ENCODE measurements at regions of chr1 and their contacts with region 1.

Region 1: DNA sequence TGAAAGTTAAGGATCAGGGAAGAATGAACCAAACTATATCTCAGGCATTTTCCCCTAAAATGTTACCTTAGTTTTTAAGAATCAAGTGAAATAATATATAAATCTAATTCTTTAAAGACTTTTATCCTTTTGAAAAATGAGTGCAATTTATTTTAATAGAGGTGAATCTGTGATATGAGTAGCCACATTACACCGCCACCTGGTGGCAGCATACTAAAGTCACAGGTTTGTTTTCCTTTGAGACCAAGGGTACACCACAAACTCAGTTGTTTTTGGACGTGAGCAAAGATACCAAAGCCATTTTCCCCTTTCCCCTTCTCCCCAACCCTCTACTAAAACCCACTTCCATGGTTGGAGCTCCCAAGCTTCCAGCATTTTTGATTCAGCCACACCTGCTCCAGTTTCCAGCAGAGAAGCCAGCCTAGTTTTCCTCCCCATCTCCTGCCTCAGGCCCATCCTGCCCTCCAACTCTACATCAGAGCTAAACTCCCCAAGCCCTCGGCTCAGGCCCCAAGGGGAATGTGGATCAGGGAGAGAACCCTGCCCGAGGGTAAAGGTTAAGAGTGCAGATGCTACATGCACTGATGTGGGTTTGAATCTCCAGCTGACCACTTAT is 22.9 kb upstream of the LDLRAP1 start:
- DNase-seq: no peak
- H3K4me3 ChIP-seq: no peak overlapping the region
- CTCF ChIP-seq: peak; percentile 55

Region 2: DNA sequence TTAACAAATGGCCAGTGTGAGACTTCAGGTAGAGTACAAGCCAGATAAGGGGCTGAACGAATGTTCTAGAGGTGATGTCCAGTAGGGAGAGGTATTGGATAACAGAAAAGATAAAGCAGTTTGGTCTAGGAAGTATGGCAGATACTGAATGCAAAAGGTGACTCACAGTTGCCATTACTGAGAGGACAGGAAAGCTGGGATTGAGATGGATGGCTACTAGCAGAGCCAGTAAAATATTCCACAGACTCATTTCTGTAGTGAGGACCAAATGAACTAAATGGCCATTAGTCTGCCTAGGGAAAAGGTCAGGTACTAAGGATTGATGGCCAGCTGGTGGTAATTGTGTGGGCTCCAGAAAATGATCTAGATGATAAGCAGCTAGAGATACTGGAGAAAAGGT is 78.4 kb before region 1 on chr1:
- CTCF ChIA-PET with region 1: interaction called, 30 read pairs
- POLR2A ChIA-PET with region 1: no interaction called
- DNase-seq: no peak
- H3K4me3 ChIP-seq: no peak overlapping the region
- CTCF ChIP-seq: no peak

Region 3: DNA sequence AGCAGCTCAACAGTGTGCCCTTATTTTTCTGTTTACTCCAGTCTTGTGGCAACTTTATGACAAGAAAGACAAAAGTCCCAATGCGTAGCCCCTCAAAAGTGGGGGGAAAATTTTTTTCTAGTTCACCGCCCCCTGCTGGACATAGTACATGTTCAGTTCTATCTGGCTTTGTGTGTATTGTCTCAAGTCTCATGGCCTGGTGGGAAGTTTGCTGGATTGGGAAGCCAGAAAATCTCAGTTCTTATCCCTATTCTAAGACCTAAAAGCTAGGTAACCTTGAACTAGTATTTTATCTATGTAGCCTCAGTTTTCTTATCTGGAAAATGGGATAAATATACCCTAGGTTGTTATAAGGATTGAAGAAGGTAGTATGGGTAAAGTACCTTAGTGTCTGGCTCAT is 32.9 kb before region 1 on chr1:
- CTCF ChIA-PET with region 1: interaction called, 17 read pairs
- POLR2A ChIA-PET with region 1: no interaction called
- DNase-seq: no peak
- H3K4me3 ChIP-seq: no peak overlapping the region
- CTCF ChIP-seq: no peak

Region 4: GRCh38 chr1:25538191-25538761 is 17.7 kb after region 1 on chr1:
- CTCF ChIA-PET with region 1: interaction called, 43 read pairs
- POLR2A ChIA-PET with region 1: no interaction called
- DNase-seq: no peak
- H3K4me3 ChIP-seq: no peak overlapping the region
- CTCF ChIP-seq: no peak

Region 5: GRCh38 chr1:25572708-25573600 is 52.4 kb after region 1 on chr1:
- CTCF ChIA-PET with region 1: interaction called, 14 read pairs
- POLR2A ChIA-PET with region 1: no interaction called
- DNase-seq: no peak
- H3K4me3 ChIP-seq: no peak overlapping the region
- CTCF ChIP-seq: peak; percentile 85